T-cell (primary cell): ENCODE measurements at regions of chr13 and their contacts with region 1.

Region 1: GRCh38 chr13:44470638-44471562 is 97.3 kb downstream of the SERP2 start:
- DNase-seq: peak in 1 of 35 experiments; percentile 52
- ATAC-seq: no peak
- H3K4me3 ChIP-seq: no peak overlapping the region
- H3K4me3 Mint-ChIP-seq: no peak overlapping the region
- H3K27ac ChIP-seq: no peak overlapping the region
- H3K27ac Mint-ChIP-seq: no peak overlapping the region
- H3K4me1 ChIP-seq: no peaks in the 10 kb centered on the region
- H3K4me1 Mint-ChIP-seq: peaks cover 0 to 5% (median 0%) of the 10 kb centered on the region in 3 donors
- H3K27me3 ChIP-seq: no peaks in the 10 kb centered on the region
- H3K27me3 Mint-ChIP-seq: no peaks in the 10 kb centered on the region

Region 2: DNA sequence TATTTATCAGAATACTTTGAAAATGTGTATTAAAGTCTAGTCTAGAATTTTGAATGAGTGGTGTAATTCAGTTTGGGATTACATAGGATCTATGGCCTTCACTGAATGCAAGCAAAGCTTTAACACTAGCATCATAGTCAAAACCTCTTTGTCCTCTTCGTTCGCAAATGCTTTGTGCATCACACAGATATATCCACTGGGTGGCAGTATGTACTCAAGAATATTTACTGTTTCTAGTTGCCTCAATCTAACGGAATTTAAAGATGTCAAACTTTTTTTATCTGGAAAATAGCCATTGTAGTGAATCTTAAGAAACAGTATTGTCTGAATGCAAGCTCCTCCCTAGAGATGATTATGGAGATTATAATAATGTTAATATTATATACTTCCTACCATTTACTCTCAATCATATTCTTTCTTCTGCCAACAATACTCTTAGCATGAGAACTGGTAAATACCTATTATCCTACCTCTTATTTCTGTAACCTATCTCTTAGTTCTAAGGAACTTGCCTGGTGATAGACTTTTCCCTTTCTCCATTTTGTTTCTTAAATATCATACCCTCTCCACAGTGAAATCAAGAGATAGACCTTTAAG is 565.4 kb before region 1 on chr13:
- CTCF ChIA-PET with region 1: interaction called, 13 read pairs
- POLR2A ChIA-PET with region 1: interaction called in 1 of 2 experiments, 4 read pairs
- DNase-seq: peak in 15 of 35 experiments; percentile 3 to 73 (median 12)
- ATAC-seq: peak; percentile 56 to 72 (median 69)
- H3K4me3 ChIP-seq: no peak overlapping the region
- H3K4me3 Mint-ChIP-seq: no peak overlapping the region
- H3K27ac ChIP-seq: no peak overlapping the region
- H3K27ac Mint-ChIP-seq: no peak overlapping the region
- H3K4me1 ChIP-seq: no peaks in the 10 kb centered on the region
- H3K4me1 Mint-ChIP-seq: peaks cover 0 to 6% (median 3%) of the 10 kb centered on the region in 3 donors
- H3K27me3 ChIP-seq: no peaks in the 10 kb centered on the region
- H3K27me3 Mint-ChIP-seq: peaks cover 6 to 15% of the 10 kb centered on the region in 2 donors

Region 3: DNA sequence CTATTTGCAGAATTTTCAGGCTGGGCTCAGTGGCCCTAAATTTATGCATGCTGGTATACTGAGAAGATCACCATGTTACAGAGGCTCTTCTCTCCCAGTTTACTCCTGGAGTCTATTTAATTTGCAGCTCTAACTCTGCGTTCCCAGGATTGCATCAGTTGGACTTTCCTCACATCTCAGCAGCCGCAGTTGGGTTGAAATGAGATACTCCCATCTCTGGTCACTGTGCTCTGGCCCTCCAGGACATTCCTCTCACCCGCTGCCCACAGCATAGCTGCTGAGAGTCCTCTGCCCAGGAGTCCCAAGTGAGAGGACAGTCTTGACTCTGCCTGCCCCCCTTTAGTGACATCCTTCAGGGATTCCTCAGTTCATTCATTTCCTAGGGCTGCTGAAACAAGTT is 440.3 kb before region 1 on chr13:
- CTCF ChIA-PET with region 1: no interaction called
- POLR2A ChIA-PET with region 1: no interaction called
- DNase-seq: no peak
- ATAC-seq: no peak
- H3K4me3 ChIP-seq: no peak overlapping the region
- H3K4me3 Mint-ChIP-seq: no peak overlapping the region
- H3K27ac ChIP-seq: no peak overlapping the region
- H3K27ac Mint-ChIP-seq: no peak overlapping the region
- H3K4me1 ChIP-seq: no peaks in the 10 kb centered on the region
- H3K4me1 Mint-ChIP-seq: no peaks in the 10 kb centered on the region
- H3K27me3 ChIP-seq: peaks cover 0 to 4% of the 10 kb centered on the region in 2 experiments
- H3K27me3 Mint-ChIP-seq: peaks cover 4 to 16% of the 10 kb centered on the region in 2 donors

Region 4: DNA sequence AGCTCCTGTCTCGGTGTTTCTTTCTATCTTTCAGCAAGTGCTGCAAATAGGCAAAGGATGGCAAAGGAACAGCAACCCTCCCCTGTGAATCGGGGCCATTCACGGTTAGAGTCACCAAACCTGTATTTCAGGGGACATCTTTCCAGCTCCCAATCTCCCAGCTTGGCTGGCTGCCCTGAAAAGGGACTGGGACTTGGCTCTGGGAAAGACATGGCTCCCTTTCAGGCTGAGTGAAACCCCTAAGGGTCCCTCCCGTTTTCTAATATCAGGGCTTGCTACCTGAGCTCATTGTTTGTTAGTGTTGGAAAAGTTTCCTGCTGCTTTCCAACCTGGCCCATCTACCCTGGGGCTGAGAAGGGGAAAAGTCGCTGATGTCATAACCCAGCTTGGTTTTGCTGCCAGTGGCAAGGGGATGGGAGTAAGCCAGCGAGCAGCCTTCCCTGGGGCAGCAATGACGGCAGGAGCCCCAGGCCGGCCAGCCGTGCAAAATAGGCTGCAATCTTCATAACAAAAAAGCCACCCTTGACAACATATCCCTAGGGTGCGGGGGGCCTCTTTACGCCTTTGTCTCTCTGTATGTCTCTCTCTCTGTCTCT is 67.3 kb before region 1 on chr13:
- CTCF ChIA-PET with region 1: no interaction called
- POLR2A ChIA-PET with region 1: no interaction called
- DNase-seq: no peak
- ATAC-seq: no peak
- H3K4me3 ChIP-seq: no peak overlapping the region
- H3K4me3 Mint-ChIP-seq: no peak overlapping the region
- H3K27ac ChIP-seq: no peak overlapping the region
- H3K27ac Mint-ChIP-seq: no peak overlapping the region
- H3K4me1 ChIP-seq: no peaks in the 10 kb centered on the region
- H3K4me1 Mint-ChIP-seq: no peaks in the 10 kb centered on the region
- H3K27me3 ChIP-seq: peaks cover 0 to 13% of the 10 kb centered on the region in 2 experiments
- H3K27me3 Mint-ChIP-seq: peaks cover 4 to 18% of the 10 kb centered on the region in 2 donors

Region 5: DNA sequence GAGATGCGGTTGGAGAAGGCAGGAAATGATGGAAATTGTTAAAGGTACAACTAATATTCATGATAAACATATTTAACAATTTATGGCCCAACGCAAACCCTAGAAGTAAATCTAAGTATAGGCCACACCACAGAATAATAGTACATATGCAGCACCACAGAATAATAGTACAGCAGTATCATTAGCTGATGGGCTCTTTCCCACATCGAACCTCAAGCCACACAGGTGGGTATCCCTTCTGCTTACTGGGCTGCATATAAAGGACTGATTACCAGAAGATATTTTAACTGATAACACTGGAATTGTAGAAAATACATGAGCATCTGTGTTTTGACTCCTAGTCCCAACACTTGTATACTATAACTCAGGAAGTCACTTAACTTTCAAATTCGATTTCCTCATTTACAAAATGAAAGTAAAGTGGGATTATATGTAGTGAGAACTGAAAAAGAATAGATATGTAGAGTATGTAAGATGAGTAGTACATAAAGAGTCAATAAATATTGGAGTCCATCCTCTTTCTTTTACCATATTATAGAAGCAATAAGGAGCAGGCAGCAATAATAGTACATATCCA is 13.8 kb after region 1 on chr13:
- CTCF ChIA-PET with region 1: interaction called, 3 to 14 read pairs
- POLR2A ChIA-PET with region 1: no interaction called
- DNase-seq: peak in 1 of 35 experiments; percentile 13
- ATAC-seq: peak in 1 of 4 experiments; percentile 50
- H3K4me3 ChIP-seq: no peak overlapping the region
- H3K4me3 Mint-ChIP-seq: peak overlapping the region; percentile 35 to 43 (median 42)
- H3K27ac ChIP-seq: no peak overlapping the region
- H3K27ac Mint-ChIP-seq: peak overlapping the region; percentile 2 to 56
- H3K4me1 ChIP-seq: peaks cover 0 to 4% of the 10 kb centered on the region in 2 experiments
- H3K4me1 Mint-ChIP-seq: peaks cover 21 to 24% (median 23%) of the 10 kb centered on the region in 3 donors
- H3K27me3 ChIP-seq: no peaks in the 10 kb centered on the region
- H3K27me3 Mint-ChIP-seq: no peaks in the 10 kb centered on the region

Region 6: GRCh38 chr13:44646044-44646443 is 175.1 kb after region 1 on chr13:
- CTCF ChIA-PET with region 1: interaction called in 1 of 2 experiments, 12 read pairs
- POLR2A ChIA-PET with region 1: no interaction called
- DNase-seq: no peak
- ATAC-seq: no peak
- H3K4me3 ChIP-seq: no peak overlapping the region
- H3K4me3 Mint-ChIP-seq: no peak overlapping the region
- H3K27ac ChIP-seq: no peak overlapping the region
- H3K27ac Mint-ChIP-seq: no peak overlapping the region
- H3K4me1 ChIP-seq: no peaks in the 10 kb centered on the region
- H3K4me1 Mint-ChIP-seq: no peaks in the 10 kb centered on the region
- H3K27me3 ChIP-seq: peaks cover 0 to under 1% of the 10 kb centered on the region in 2 experiments
- H3K27me3 Mint-ChIP-seq: peaks cover 0 to 2% of the 10 kb centered on the region in 2 donors